GM13976 (cell line): ENCODE measurements at regions of chr6 and their contacts with region 1.

Region 1: GRCh38 chr6:149431905-149432775 is 32.1 kb downstream of the SUMO4 start:
- DNase-seq: peak; percentile 88
- CTCF ChIP-seq: peak; percentile 94

Region 2: GRCh38 chr6:148578245-148578732 is 853.9 kb before region 1 on chr6:
- in situ Hi-C with region 1: loop called (anchors 25 kb)
- DNase-seq: peak; percentile 76
- CTCF ChIP-seq: peak; percentile 94

Region 3: GRCh38 chr6:149032599-149033405 is 399.3 kb before region 1 on chr6:
- in situ Hi-C with region 1: loop called (anchors 10 kb)
- DNase-seq: peak; percentile 83
- CTCF ChIP-seq: no peak

Region 4: DNA sequence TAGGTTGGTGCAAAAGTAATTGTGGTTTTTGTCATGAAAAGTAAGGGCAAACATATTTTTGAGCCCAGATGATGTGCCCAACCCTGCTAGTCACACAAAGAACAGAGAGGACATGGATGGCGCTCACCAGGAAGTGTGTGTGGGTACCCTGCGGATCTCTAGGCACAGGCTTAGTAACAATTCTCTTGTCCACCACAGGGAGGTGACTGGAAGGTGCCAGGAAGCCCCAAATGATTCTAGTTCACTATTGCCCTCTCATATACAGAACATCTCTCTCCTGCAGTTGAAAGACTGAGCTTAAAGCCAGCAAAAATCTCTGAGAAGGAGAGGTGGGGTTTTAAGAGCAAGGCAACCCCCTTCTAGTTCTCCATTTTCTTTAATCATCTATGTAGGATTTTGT is 386.7 kb before region 1 on chr6:
- in situ Hi-C with region 1: no loop called
- DNase-seq: no peak
- CTCF ChIP-seq: no peak

Region 5: GRCh38 chr6:149079911-149080481 is 352.1 kb before region 1 on chr6:
- in situ Hi-C with region 1: loop called (anchors 10 kb)
- DNase-seq: no peak
- CTCF ChIP-seq: no peak